Sigmoid colon (tissue), 7 donors: ENCODE measurements at regions of chr6 and their contacts with region 1.

Region 1: GRCh38 chr6:139375232-139376016 is 976 bp upstream of the CITED2 start:
- DNase-seq: peak; percentile 98
- H3K4me3 ChIP-seq: peak overlapping the region; percentile 65 to 89 (median 86)
- H3K27ac ChIP-seq: peak overlapping the region; percentile 96 to 97 (median 97)
- H3K4me1 ChIP-seq: peaks cover 4 to 26% (median 12%) of the 10 kb centered on the region in 4 donors
- H3K27me3 ChIP-seq: no peaks in the 10 kb centered on the region
- CTCF ChIP-seq: no peak
- EP300 ChIP-seq: peak in 3 of 4 donors; percentile 48 to 82 (median 66)
- POLR2A ChIP-seq: peak in 1 of 2 donors; percentile 49

Region 2: GRCh38 chr6:139308286-139308916 is 67.0 kb before region 1 on chr6:
- intact Hi-C with region 1: no loop called
- DNase-seq: no peak
- H3K4me3 ChIP-seq: no peak overlapping the region
- H3K27ac ChIP-seq: peak overlapping the region in 2 of 4 donors; percentile 4 to 7
- H3K4me1 ChIP-seq: no peaks in the 10 kb centered on the region
- H3K27me3 ChIP-seq: no peaks in the 10 kb centered on the region
- CTCF ChIP-seq: no peak
- EP300 ChIP-seq: no peak
- POLR2A ChIP-seq: no peak

Region 3: DNA sequence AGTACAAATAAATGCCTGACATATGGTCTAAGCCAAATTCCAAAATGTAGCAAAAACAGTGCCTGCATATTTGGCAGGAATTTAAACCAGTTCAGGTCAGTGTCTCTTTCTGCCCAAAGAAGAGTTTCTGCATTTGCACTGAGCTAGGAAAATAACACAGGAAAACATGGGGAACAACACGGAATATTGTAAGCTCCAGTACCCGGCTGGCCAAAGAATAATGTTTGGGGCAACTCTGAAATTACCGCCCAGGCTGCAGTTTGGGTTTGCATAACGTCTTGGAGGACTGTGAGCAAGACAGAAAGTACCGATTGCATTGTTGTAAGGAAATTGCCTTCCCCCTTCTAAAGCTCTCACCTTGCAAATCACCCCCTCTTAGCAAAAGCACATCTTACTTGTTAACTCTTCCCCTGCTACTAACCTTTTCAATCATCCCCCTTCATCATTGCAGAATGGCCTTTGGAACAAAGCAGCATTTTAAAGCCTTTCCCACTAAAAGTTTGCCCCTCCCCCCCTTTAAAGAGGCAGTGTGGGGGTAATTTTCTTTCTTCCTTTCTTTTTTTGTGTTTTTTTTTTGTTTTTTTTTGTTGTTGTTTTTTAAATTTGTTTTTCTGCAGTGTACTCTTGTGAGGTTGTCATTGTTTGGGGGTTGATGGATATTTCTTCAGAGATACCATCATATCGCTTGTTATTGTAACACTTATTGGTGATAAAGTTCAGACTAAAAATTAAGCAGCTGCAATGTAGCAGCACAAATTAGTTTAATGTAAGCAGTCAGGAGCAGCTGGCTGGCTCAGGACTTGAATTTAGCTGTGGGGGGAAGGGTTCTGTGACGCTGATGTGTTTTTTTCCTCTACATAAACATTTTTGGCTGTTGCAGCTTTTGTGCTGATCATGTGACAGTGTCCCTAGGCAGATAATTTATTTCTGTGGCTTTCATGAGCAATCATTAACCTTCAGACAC is 99.0 kb after region 1 on chr6:
- intact Hi-C with region 1: loop called (anchors 2 kb)
- DNase-seq: peak; percentile 70
- H3K4me3 ChIP-seq: peak overlapping the region; percentile 0 to 26 (median 19)
- H3K27ac ChIP-seq: peak overlapping the region; percentile 61 to 85 (median 76)
- H3K4me1 ChIP-seq: peaks cover 0 to 38% (median 31%) of the 10 kb centered on the region in 4 donors
- H3K27me3 ChIP-seq: no peaks in the 10 kb centered on the region
- CTCF ChIP-seq: no peak
- EP300 ChIP-seq: peak in 3 of 4 donors; percentile 3 to 60 (median 43)
- POLR2A ChIP-seq: no peak

Region 4: DNA sequence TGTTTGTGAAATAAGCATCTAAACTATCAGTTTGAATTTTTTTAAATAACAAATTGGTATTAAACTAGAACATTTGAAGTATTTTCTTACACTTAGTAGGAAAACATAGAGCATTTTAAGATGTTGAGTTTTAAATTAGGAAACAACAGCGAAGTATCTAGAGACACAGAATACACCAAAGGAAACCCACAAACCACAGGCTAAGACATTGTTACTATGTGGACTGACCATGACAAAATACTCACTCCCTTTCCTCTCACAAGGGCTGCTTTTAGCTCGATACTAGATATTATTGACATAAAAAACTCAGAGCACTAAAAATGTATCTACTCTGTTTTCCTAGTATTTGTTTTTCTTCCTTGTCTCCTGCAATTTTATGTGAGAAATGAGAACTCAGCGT is 265.0 kb after region 1 on chr6:
- intact Hi-C with region 1: loop called (anchors 5 kb)
- DNase-seq: no peak
- H3K4me3 ChIP-seq: no peak overlapping the region
- H3K27ac ChIP-seq: no peak overlapping the region
- H3K4me1 ChIP-seq: peaks cover 0 to 26% (median 18%) of the 10 kb centered on the region in 4 donors
- H3K27me3 ChIP-seq: no peaks in the 10 kb centered on the region
- CTCF ChIP-seq: no peak
- EP300 ChIP-seq: no peak
- POLR2A ChIP-seq: no peak

Region 5: GRCh38 chr6:139778688-139779087 is 403.3 kb after region 1 on chr6:
- intact Hi-C with region 1: loop called (anchors 5 kb)
- DNase-seq: no peak
- H3K4me3 ChIP-seq: no peak overlapping the region
- H3K27ac ChIP-seq: peak overlapping the region; percentile 57 to 73 (median 67)
- H3K4me1 ChIP-seq: peaks cover 0 to 44% (median 40%) of the 10 kb centered on the region in 4 donors
- H3K27me3 ChIP-seq: no peaks in the 10 kb centered on the region
- CTCF ChIP-seq: no peak
- EP300 ChIP-seq: peak in 1 of 4 donors; percentile 42
- POLR2A ChIP-seq: no peak

Region 6: GRCh38 chr6:139981768-139982181 is 606.4 kb after region 1 on chr6:
- intact Hi-C with region 1: loop called (anchors 5 kb)
- DNase-seq: no peak
- H3K4me3 ChIP-seq: no peak overlapping the region
- H3K27ac ChIP-seq: peak overlapping the region; percentile 67 to 82 (median 80)
- H3K4me1 ChIP-seq: peaks cover 0 to 61% (median 44%) of the 10 kb centered on the region in 4 donors
- H3K27me3 ChIP-seq: no peaks in the 10 kb centered on the region
- CTCF ChIP-seq: no peak
- EP300 ChIP-seq: no peak
- POLR2A ChIP-seq: no peak

Region 7: GRCh38 chr6:140921366-140922226 is 1546.2 kb after region 1 on chr6:
- intact Hi-C with region 1: loop called (anchors 2 kb)
- DNase-seq: no peak
- H3K4me3 ChIP-seq: no peak overlapping the region
- H3K27ac ChIP-seq: no peak overlapping the region
- H3K4me1 ChIP-seq: no peaks in the 10 kb centered on the region
- H3K27me3 ChIP-seq: no peaks in the 10 kb centered on the region
- CTCF ChIP-seq: peak; percentile 22 to 47 (median 36)
- EP300 ChIP-seq: no peak
- POLR2A ChIP-seq: no peak